ENCODE measurements at regions of chr6 and their contacts with region 1.

Region 1: GRCh38 chr6:1624851-1625781 is 15.4 kb downstream of the FOXC1 start:
- DNase-seq: no peak
- H3K4me3 ChIP-seq: peak overlapping the region; percentile 72 to 94
- H3K27ac ChIP-seq: peak overlapping the region; percentile 96 to 100
- H3K4me1 ChIP-seq: peaks cover 6 to 37% of the 10 kb centered on the region in 2 donors
- H3K27me3 ChIP-seq: no peaks in the 10 kb centered on the region
- CTCF ChIP-seq: no peak

Region 2: DNA sequence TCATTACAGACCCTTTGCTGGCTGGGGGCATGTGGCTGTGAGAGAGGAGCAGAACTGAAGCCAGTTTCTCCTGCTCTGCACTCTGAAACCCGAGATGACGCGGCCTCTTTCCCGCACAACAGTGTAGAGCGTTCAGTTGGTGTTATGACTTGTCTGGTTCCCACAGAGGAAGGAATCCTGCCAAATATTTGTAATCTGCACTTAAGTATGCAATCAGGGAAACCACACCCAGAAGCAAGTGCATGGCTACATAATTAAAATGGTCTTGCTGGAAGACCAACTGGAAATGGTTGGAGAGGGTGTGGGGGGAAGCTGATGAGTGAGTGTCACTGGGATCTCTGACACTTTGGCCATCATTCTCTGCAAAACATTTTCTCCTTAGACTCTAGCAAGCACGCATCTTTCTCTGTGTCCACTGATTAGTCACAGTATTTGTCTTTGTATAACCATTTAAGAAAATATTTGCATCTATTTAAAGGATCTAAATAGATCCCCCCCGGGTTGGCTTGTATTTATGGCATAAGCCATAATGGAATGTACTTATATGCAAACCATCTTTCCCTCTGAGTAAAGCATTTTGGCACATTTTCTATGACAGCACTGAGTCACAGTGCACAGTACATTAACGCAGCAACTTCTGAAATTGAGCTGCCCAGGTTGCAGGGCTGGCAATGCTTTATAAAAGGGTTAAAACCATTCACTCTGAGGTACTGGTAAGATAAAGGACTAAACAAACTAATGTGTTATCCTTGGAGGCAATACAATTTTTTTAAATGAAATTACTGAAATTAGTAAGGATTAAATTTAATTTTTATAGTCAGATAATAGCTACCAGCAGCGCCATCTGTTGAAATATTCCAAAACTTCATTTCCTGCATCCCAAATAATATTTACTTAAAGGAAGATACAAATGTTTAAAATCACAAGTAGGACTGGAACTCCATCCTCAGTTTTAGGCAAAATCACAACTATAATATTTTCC is 61.3 kb after region 1 on chr6:
- intact Hi-C with region 1: loop called (anchors 2 kb)
- DNase-seq: peak in 1 of 2 donors; percentile 86
- H3K4me3 ChIP-seq: peak overlapping the region in 1 of 2 donors; percentile 32
- H3K27ac ChIP-seq: peak overlapping the region; percentile 78 to 80
- H3K4me1 ChIP-seq: peaks cover 7 to 16% of the 10 kb centered on the region in 2 donors
- H3K27me3 ChIP-seq: no peaks in the 10 kb centered on the region
- CTCF ChIP-seq: peak; percentile 5 to 31 (median 10)

Region 3: GRCh38 chr6:1695546-1696462 is 70.7 kb after region 1 on chr6:
- intact Hi-C with region 1: loop called (anchors 2 kb)
- DNase-seq: peak in 1 of 2 donors; percentile 86
- H3K4me3 ChIP-seq: peak overlapping the region in 1 of 2 donors; percentile 32
- H3K27ac ChIP-seq: peak overlapping the region; percentile 84 to 87
- H3K4me1 ChIP-seq: peaks cover 15 to 41% of the 10 kb centered on the region in 2 donors
- H3K27me3 ChIP-seq: no peaks in the 10 kb centered on the region
- CTCF ChIP-seq: no peak

Region 4: DNA sequence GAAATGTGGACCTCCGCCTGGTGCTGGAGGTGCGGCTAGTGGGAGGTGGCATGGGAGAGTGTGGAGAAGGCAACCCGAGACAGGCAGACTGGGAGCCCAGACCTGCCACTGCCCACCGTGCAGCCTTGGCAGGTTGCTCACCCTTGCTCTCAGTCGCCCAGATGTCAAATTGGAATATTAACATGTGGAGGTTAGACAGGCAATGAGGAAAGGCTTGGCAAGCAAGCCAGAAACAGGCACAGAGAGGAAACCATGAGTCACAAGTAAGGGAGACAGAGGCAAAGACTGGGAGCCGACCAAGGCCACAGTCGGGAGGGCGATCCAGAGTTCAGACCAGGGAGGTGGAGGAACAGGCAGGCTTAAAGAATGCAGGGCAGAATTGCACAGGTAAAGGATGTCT is 162.8 kb after region 1 on chr6:
- intact Hi-C with region 1: loop called (anchors 5 kb)
- DNase-seq: peak; percentile 54 to 91
- H3K4me3 ChIP-seq: no peak overlapping the region
- H3K27ac ChIP-seq: peak overlapping the region; percentile 29 to 47
- H3K4me1 ChIP-seq: peaks cover 3 to 16% of the 10 kb centered on the region in 2 donors
- H3K27me3 ChIP-seq: no peaks in the 10 kb centered on the region
- CTCF ChIP-seq: no peak

Region 5: DNA sequence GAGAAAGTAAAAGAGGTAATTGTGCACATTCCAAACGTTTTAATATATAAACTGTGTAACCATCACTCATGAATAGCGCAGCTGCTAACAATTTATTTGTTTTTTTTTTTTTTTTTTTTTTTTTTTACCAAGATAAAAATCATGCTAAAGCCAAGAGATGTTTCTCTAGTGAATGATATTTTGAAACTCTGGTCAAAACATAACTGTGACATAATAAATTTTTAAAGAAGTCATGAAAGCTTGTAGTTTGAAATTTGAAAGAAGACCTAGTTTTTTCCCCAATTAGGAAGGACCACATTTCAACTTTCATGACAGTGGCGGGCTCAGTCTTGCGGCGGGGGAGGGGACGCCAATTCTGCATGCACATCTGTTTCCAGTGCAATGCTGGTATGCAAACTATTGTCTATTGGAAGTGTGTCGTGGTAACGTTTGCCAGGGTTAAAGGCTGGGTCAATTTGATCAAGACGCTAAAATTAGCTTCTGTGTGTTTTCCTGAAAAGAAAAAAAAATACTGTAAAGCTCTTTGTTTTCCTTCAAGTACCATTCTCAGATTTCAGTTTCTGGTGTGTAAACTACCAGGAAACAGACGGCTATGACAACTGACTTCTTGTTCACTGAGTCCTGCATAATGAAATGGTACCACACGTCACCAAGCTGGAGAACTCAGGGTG is 196.5 kb after region 1 on chr6:
- intact Hi-C with region 1: loop called (anchors 5 kb)
- DNase-seq: no peak
- H3K4me3 ChIP-seq: peak overlapping the region; percentile 18 to 63
- H3K27ac ChIP-seq: peak overlapping the region; percentile 84 to 86
- H3K4me1 ChIP-seq: peaks cover 0 to 17% of the 10 kb centered on the region in 2 donors
- H3K27me3 ChIP-seq: no peaks in the 10 kb centered on the region
- CTCF ChIP-seq: no peak

Region 6: DNA sequence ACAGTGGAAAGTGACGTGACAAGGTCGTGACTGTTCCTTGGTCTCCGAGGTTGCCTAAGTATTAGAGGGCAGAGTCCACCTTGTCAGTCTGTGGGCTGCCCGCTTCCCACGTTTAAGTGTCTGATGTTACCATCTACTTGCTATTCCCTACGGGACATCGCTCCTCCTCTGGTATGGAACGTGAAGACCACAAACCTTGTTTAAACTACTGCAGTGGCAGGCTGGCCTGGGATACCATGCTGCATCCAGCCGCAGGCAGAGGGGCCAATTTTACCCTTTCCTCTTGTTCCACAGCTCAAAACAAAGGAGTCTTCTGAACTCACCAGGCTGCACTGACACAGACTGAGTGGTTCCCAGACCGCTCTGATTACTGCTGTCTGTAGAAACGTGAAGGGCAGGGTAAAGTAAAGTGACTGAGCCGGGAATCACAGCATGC is 260.5 kb after region 1 on chr6:
- intact Hi-C with region 1: loop called (anchors 2 kb)
- DNase-seq: no peak
- H3K4me3 ChIP-seq: peak overlapping the region; percentile 14 to 47
- H3K27ac ChIP-seq: peak overlapping the region; percentile 89 to 92
- H3K4me1 ChIP-seq: peaks cover 6 to 34% of the 10 kb centered on the region in 2 donors
- H3K27me3 ChIP-seq: no peaks in the 10 kb centered on the region
- CTCF ChIP-seq: no peak

Region 7: DNA sequence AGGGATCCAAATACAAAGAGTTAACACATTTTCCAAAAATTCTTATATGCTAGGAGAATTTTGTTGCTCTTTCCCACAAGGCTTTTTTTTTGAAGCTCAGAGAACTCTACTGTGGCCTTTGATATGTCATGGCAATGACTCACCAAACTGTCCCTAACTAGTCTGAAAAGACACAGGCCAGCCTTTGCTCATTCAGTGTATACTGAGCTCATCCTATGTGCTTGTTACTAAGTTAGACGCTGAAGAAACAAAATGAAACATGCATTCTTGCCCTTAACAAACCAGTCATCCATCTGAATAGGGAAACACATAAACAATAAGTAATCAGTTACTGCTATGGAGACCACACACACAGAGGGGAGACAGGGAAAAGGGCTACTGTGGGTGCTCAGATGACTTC is 276.4 kb after region 1 on chr6:
- intact Hi-C with region 1: loop called (anchors 5 kb)
- DNase-seq: no peak
- H3K4me3 ChIP-seq: no peak overlapping the region
- H3K27ac ChIP-seq: peak overlapping the region; percentile 86 to 93
- H3K4me1 ChIP-seq: peaks cover 18 to 37% of the 10 kb centered on the region in 2 donors
- H3K27me3 ChIP-seq: no peaks in the 10 kb centered on the region
- CTCF ChIP-seq: no peak